HAP-1 (cell line): ENCODE measurements at regions of chr12 and their contacts with region 1.

Region 1: GRCh38 chr12:62876938-62877548 is 57.9 kb downstream of the PPM1H start:
- DNase-seq: no peak
- H3K4me3 ChIP-seq: no peak overlapping the region
- H3K4me1 ChIP-seq: peaks cover 13% of the 10 kb centered on the region
- H3K27me3 ChIP-seq: no peaks in the 10 kb centered on the region

Region 2: GRCh38 chr12:62827042-62827441 is 50.0 kb before region 1 on chr12:
- in situ Hi-C with region 1: no loop called
- DNase-seq: no peak
- H3K4me3 ChIP-seq: no peak overlapping the region
- H3K4me1 ChIP-seq: no peaks in the 10 kb centered on the region
- H3K27me3 ChIP-seq: no peaks in the 10 kb centered on the region

Region 3: DNA sequence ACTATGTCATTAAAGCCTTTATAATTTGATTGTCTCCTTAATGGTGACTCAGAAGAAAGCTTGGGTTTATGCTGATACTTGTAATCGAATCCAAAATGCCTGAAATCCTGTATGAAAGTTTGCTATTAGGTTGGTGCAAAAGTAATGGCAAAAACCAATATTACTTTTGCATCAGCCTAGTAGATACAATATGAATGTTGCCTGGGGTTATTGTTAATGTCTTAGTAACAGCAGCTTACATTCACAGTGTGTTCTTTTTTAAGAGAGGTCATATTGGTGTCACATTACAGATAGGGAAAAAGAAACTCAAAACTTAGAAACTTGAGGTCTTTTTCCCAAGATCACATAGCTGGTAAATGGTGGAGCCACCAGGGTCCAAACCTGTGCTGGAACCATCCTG is 992.6 kb after region 1 on chr12:
- in situ Hi-C with region 1: loop called (anchors 5 kb)
- DNase-seq: no peak
- H3K4me3 ChIP-seq: no peak overlapping the region
- H3K4me1 ChIP-seq: peaks cover 4% of the 10 kb centered on the region; the same call in 1 of the 2 replicates
- H3K27me3 ChIP-seq: no peaks in the 10 kb centered on the region